ENCODE measurements at regions of chr17 and their contacts with region 1.

Region 1: DNA sequence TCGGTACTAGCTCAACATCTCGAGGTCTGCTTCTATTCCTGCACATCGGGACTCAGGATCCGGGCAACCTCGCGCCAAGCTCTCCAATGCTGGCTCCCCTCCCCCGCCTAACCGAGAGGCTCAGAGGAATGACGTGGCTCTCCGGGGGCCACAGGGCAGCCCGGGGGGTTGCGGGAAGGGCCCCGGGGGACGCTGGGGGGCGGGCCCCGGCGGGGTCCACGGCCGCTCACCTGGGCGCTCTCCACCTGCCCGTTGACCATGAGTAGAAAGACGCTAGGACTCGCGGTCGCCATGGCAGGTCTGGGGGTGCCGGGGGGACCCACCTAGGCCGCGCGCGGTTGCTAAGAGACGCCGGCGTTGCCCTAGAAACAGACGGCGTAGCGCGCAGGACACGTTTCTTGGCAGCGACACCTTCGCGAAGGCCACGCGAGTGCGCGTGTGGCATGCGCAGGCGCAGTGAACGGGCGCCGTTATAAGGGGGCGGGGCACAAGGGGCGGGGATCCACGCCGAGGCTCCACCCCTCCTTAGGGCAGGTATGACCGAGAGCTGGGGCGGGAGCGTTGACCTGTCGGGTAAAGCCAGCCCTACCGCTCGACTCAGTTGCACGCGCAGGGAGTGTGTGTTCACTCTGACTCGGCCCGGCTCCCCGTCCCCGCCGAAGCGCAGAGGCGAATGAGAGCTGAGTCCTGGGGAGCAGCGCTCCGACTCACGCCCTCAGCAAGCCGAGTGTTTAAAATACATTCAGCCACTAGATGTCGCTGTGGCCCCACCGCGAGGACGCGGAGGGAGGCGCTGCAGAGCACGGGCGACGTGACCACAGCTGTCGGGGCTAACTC is at the start of gene B9D1:
- DNase-seq: peak; percentile 83 to 98 (median 91)
- ATAC-seq: peak; percentile 89 to 95 (median 91)
- H3K4me3 ChIP-seq: peak within 1 kb of the TSS; percentile 77 to 79
- H3K4me3 Mint-ChIP-seq: peak within 1 kb of the TSS; percentile 73 to 88 (median 86)
- H3K27ac ChIP-seq: peak within 1 kb of the TSS; percentile 24
- H3K27ac Mint-ChIP-seq: peak within 1 kb of the TSS; percentile 69 to 82
- H3K4me1 ChIP-seq: peaks cover 0 to 14% of the 10 kb centered on the region in 2 experiments
- H3K4me1 Mint-ChIP-seq: peaks cover 0 to 10% (median 7%) of the 10 kb centered on the region in 3 donors
- H3K27me3 ChIP-seq: peaks cover 0 to 35% of the 10 kb centered on the region in 2 experiments
- H3K27me3 Mint-ChIP-seq: peaks cover 10 to 16% of the 10 kb centered on the region in 2 donors
- total RNA-seq, gene B9D1: 1.2 to 2.5 (median 2.1) TPM

Region 2: DNA sequence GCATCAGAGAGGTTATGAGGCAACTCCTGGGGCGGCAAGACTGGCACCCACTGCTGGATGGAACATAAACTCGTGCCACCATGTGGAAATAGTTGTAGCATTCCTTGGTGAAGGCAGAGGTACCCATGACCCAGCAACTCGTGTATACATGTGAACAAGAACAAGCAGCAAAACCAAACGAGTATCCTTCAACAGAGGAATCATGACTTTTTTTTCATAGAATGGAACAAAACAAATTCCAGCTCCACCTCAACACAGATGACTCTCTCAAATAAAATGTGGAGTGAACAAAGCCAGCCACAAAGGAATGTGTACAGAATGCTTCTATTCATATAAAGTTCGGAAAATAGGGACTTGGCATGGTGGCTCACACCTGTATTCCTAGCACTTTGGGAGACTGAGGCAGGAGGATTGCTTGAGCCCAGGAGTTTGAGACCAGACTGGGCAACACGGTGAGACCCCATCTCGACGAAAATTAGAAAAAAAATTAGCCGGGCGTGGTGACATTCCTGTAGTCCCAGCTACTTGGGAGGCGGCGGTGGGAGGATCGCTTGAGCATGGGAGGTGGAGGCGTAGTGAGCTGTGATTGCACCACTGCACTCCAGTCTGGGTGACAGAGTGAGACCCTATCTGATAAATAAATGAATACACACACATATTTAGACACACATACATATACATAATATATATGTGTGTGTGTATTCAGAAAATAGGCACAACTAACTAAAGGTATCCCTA is 35.3 kb before region 1 on chr17:
- CTCF ChIA-PET with region 1: no interaction called
- POLR2A ChIA-PET with region 1: no interaction called
- DNase-seq: no peak
- ATAC-seq: no peak
- H3K4me3 ChIP-seq: no peak overlapping the region
- H3K4me3 Mint-ChIP-seq: no peak overlapping the region
- H3K27ac ChIP-seq: no peak overlapping the region
- H3K27ac Mint-ChIP-seq: no peak overlapping the region
- H3K4me1 ChIP-seq: no peaks in the 10 kb centered on the region
- H3K4me1 Mint-ChIP-seq: no peaks in the 10 kb centered on the region
- H3K27me3 ChIP-seq: peaks cover 0 to 9% of the 10 kb centered on the region in 2 experiments
- H3K27me3 Mint-ChIP-seq: no peaks in the 10 kb centered on the region

Region 3: GRCh38 chr17:19377602-19378392 is 15.3 kb after region 1 on chr17:
- CTCF ChIA-PET with region 1: interaction called, 3 to 64 read pairs
- POLR2A ChIA-PET with region 1: interaction called, 3 to 6 read pairs
- DNase-seq: peak; percentile 84 to 96 (median 90)
- ATAC-seq: peak; percentile 86 to 91 (median 89)
- H3K4me3 ChIP-seq: peak overlapping the region; percentile 86 to 98
- H3K4me3 Mint-ChIP-seq: peak overlapping the region; percentile 97 to 100 (median 100)
- H3K27ac ChIP-seq: peak overlapping the region; percentile 77
- H3K27ac Mint-ChIP-seq: peak overlapping the region; percentile 98 to 99
- H3K4me1 ChIP-seq: peaks cover 8 to 21% of the 10 kb centered on the region in 2 experiments
- H3K4me1 Mint-ChIP-seq: peaks cover 9 to 29% (median 13%) of the 10 kb centered on the region in 3 donors
- H3K27me3 ChIP-seq: no peaks in the 10 kb centered on the region
- H3K27me3 Mint-ChIP-seq: no peaks in the 10 kb centered on the region

Region 4: DNA sequence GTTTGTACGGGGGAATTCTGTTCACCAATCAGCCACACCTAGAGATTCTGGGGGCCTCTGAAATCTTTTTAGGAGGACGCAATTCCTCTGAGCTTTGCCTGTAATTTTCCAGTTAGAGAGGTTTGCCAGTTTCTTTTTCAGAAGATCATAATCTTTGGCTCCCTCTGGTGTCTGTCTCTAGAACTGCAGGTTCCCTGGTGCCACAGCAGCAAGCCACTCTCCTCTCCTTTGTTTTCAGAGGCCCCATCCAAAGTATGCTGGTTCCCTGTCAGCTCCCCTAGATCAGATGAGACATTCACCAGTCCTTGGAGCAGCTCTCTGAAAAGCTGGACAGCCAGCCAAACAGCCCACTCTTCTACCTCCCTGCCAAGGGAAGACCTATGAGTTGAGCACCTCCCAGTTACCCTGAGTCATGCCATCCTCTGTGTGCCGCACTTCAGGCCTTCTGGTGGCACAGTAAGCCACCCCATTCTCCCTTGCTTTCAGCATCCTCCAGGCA is 84.6 kb after region 1 on chr17:
- CTCF ChIA-PET with region 1: interaction called, 8 to 16 read pairs
- POLR2A ChIA-PET with region 1: no interaction called
- DNase-seq: peak in 33 of 35 experiments; percentile 16 to 83 (median 47)
- ATAC-seq: peak in 3 of 4 experiments; percentile 50 to 73 (median 54)
- H3K4me3 ChIP-seq: no peak overlapping the region
- H3K4me3 Mint-ChIP-seq: no peak overlapping the region
- H3K27ac ChIP-seq: no peak overlapping the region
- H3K27ac Mint-ChIP-seq: no peak overlapping the region
- H3K4me1 ChIP-seq: no peaks in the 10 kb centered on the region
- H3K4me1 Mint-ChIP-seq: peaks cover 3 to 5% (median 4%) of the 10 kb centered on the region in 3 donors
- H3K27me3 ChIP-seq: peaks cover 0 to 16% of the 10 kb centered on the region in 2 experiments
- H3K27me3 Mint-ChIP-seq: peaks cover 18 to 23% of the 10 kb centered on the region in 2 donors

Measured in T-cell (primary cell).